H1 (cell line): ENCODE measurements at regions of chr2 and their contacts with region 1.

Region 1: DNA sequence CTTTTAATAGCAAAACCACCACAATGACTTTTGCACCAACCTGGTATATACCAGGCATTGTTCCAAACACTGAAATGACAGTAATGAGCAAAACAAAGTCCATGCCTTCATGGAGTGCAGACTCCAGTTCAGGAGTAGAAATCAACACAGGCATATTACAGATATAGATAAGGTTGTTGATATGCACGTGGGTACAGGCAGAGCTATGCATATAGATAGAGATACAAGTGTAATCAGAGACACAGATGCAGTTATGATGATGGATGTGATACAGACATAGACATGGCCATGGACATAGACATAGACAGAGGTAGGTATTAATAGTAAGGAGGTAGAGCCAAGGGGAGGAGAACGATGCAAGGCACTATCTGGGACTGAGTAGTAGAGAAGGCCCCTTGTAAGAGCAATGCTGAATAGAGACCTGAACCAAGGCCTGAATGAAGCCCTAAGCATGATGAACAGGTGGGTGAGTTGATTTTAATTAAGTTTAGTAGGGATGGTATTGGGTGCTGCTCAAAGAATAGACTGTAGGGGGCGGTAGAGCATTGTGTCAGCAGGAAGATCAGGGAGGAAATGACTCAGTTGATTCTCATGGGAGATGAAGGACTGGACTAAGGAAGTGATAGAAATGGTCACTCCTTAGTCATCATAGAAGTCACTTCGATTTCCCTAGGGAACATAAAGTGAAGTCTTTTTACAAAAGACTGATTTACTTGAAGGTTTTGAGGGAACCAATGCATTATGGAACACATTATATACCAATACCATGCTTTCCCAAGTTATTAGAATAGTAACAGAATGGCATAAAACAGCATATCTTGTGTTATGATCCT is 39.4 kb downstream of the CMPK2 start:
- DNase-seq: peak in 1 of 2 experiments; percentile 76
- H3K4me3 ChIP-seq: no peak overlapping the region
- H3K27ac ChIP-seq: no peak overlapping the region
- H3K4me1 ChIP-seq: no peaks in the 10 kb centered on the region; a peak in 3 of 7 replicates
- H3K27me3 ChIP-seq: no peaks in the 10 kb centered on the region; a peak in 1 of 7 replicates
- CTCF ChIP-seq: peak in 2 of 3 experiments; percentile 63 to 81; a peak in 3 of 4 replicates
- EP300 ChIP-seq: no peak
- POLR2A ChIP-seq: no peak
- RAD21 ChIP-seq: peak; percentile 72 to 78

Region 2: DNA sequence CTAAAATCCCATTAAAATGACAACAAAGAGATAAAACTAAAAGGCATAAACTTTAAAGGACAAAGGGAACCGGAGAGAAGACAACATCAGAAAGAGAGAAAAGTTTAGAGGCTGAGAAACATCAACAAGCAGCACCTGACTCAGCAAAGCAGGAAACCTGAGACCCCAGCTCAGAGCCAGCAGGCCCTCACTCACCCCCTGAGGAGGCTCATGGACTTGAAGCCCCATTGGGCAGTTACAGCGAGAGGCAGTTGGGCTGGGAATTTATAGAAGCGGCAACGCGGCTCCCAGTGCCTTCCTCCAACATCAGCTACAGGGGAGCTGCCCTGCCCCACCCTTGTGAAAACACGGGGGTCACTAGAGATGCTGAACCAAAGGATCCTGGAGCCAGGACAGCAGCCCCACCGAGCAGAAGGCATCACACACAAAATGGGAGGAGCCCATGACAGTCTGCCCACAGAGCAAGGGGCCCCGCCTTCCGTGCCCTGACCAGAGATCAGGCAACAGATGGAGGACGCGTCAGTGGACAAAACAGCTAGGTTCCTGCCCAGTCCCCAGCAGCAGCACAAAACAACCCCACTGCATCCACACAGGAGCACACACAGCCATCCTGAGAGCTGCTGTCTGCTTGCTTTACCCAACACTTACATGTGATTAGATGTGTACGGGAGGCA is 13.3 kb before region 1 on chr2:
- CTCF ChIA-PET with region 1: interaction called, 14 read pairs
- POLR2A ChIA-PET with region 1: interaction called, 3 read pairs
- DNase-seq: no peak
- H3K4me3 ChIP-seq: no peak overlapping the region
- H3K27ac ChIP-seq: no peak overlapping the region
- H3K4me1 ChIP-seq: peaks cover 0 to 8% (median 3%) of the 10 kb centered on the region in 4 experiments; a peak in 4 of 7 replicates
- H3K27me3 ChIP-seq: peaks cover 0 to 6% (median 2%) of the 10 kb centered on the region in 4 experiments; a peak in 3 of 7 replicates
- CTCF ChIP-seq: no peak
- EP300 ChIP-seq: no peak
- POLR2A ChIP-seq: no peak
- RAD21 ChIP-seq: no peak

Region 3: DNA sequence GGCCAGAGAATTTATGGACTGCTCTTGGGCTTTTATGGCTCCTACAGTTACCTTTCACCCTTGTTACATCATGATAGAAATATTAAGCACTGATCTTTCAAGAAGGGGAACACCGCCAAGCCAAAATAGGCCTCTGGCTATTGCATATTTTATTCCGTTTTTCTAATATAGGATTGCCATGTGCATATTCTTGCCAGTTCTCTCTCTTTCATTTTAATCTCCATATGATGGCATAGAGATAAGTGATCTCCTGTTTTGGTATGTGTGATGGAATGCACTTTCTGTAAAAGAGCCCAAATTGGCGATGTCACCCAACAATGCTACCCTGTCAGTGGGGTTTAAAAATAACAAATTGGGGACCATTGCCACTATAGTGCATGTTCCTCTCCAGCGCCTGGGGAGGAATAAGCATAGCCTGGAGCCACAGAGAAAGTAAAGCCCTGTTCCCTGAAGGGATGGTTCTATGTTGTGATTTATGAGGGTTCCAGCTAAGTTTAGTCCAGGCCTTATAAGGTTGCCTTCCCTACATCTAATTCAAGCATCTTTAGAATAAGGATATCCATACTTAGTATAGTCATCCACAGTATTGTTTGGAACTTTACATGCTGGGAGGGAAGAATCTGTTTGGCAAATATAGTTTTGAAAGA is 12.5 kb after region 1 on chr2:
- CTCF ChIA-PET with region 1: no interaction called
- POLR2A ChIA-PET with region 1: no interaction called
- DNase-seq: no peak
- H3K4me3 ChIP-seq: no peak overlapping the region
- H3K27ac ChIP-seq: no peak overlapping the region
- H3K4me1 ChIP-seq: no peaks in the 10 kb centered on the region
- H3K27me3 ChIP-seq: no peaks in the 10 kb centered on the region
- CTCF ChIP-seq: no peak
- EP300 ChIP-seq: no peak
- POLR2A ChIP-seq: no peak
- RAD21 ChIP-seq: no peak